ENCODE measurements at regions of chr1 and their contacts with region 1.

Region 1: GRCh38 chr1:169348383-169349036 is 19.1 kb downstream of the NME7 start:
- DNase-seq: peak; percentile 57
- ATAC-seq: peak; percentile 40; the same call in 1 of the 2 replicates
- H3K4me3 ChIP-seq: no peak overlapping the region
- H3K27ac ChIP-seq: no peak overlapping the region
- H3K4me1 ChIP-seq: no peaks in the 10 kb centered on the region
- H3K27me3 ChIP-seq: no peaks in the 10 kb centered on the region
- CTCF ChIP-seq: peak; percentile 59 to 80 (median 72)
- POLR2A ChIP-seq: no peak
- RAD21 ChIP-seq: peak; percentile 93

Region 2: DNA sequence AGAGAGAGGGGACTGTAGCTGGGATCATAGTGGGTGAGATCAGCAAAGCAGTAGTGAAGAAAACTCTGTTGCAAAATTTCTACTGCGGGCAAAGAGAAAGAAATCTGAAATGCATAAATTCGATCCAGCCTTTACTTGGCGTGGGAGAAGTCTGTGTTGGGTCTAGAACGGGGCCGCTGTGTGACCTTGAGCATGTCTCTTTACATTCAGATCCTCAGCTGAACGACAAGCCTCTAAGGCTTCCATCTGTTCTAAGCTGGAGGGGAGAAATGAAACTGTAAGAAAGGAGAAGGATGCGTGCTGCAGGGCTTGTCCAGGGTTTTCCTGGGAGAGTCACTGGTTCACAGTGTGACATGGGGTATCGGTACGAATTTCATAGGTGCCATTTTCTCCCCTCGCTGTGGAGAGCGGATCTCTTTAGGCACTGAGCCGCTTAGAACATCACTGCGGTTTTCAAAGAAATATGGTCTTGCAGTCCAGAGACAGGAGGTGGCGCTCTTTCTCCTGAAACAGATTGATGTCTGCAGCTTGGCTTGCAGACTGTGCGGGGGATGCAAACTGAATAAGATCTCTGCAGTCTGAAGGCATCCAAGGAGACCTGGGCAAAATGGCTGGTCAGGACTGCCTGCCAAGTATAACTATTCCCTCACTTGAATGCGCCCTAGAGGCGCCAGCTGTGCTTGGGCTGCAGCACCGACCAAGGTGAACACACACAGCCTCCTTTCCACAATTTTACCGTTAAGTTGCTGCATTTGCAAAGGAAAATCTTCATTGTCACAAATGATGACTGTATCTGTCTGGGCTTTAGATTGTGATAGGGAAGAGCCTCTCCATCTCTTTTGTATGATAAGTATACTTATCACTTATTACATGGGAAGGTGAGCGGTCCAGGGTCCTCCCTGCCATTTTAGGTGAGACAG is 908.8 kb before region 1 on chr1:
- CTCF ChIA-PET with region 1: interaction called, 5 read pairs
- POLR2A ChIA-PET with region 1: no interaction called
- RAD21 ChIA-PET with region 1: interaction called in 1 of 2 experiments, 3 read pairs
- intact Hi-C with region 1: loop called (anchors 2 kb)
- DNase-seq: peak; percentile 80
- ATAC-seq: peak; percentile 96
- H3K4me3 ChIP-seq: peak overlapping the region; percentile 13 to 50; a peak in 3 of 4 replicates
- H3K27ac ChIP-seq: no peak overlapping the region; the same call in 1 of the 2 replicates
- H3K4me1 ChIP-seq: peaks cover 17 to 22% of the 10 kb centered on the region in 2 experiments; a peak in 3 of 4 replicates
- H3K27me3 ChIP-seq: no peaks in the 10 kb centered on the region
- CTCF ChIP-seq: peak; percentile 82 to 86 (median 86)
- POLR2A ChIP-seq: no peak
- RAD21 ChIP-seq: peak; percentile 96

Region 3: GRCh38 chr1:168609133-168609715 is 739.3 kb before region 1 on chr1:
- CTCF ChIA-PET with region 1: interaction called, 105 read pairs
- POLR2A ChIA-PET with region 1: interaction called, 3 read pairs
- RAD21 ChIA-PET with region 1: interaction called, 11 to 24 read pairs
- intact Hi-C with region 1: no loop called
- DNase-seq: no peak
- ATAC-seq: no peak
- H3K4me3 ChIP-seq: no peak overlapping the region
- H3K27ac ChIP-seq: no peak overlapping the region
- H3K4me1 ChIP-seq: no peaks in the 10 kb centered on the region
- H3K27me3 ChIP-seq: no peaks in the 10 kb centered on the region
- CTCF ChIP-seq: no peak
- POLR2A ChIP-seq: no peak
- RAD21 ChIP-seq: no peak

Region 4: DNA sequence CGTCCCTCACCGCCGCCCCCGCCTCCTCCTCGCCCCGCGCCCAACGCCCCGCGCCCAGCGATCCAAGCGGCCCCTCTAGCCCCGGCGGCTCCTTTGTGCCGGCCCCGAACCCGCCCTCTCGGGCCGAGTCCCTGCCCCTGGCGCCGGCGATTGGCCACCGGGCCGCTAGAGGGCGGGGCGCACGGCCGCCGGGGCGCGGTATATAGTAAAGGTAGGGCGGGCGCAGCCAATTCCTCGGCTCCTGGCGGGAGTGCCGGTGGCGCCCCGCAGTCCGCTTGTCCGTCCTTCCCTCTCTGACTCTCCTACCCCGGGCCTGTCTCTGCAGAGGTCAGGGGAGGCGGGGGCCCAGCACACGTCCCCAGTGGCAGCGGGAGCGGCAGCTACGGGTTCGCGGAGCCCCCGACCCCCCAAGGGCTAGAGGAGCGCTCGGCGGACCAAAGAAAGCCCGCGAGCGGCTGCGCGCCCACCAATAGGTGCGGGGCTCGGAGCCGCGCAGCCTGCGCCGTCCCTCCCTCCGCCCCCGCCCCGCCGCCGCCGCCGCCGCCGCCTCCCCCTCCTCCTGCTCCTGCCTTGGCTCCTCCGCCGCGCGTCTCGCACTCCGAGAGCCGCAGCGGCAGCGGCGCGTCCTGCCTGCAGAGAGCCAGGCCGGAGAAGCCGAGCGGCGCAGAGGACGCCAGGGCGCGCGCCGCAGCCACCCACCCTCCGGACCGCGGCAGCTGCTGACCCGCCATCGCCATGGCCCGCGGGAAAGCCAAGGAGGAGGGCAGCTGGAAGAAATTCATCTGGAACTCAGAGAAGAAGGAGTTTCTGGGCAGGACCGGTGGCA is 242.2 kb before region 1 on chr1 and contains the start of gene ATP1B1:
- CTCF ChIA-PET with region 1: interaction called, 15 read pairs
- POLR2A ChIA-PET with region 1: no interaction called
- RAD21 ChIA-PET with region 1: interaction called in 1 of 2 experiments, 5 read pairs
- intact Hi-C with region 1: loop called (anchors 5 kb)
- DNase-seq: peak; percentile 64
- ATAC-seq: peak; percentile 86
- H3K4me3 ChIP-seq: peak within 1 kb of the TSS; percentile 72 to 84
- H3K27ac ChIP-seq: peak within 1 kb of the TSS; percentile 85
- H3K4me1 ChIP-seq: peaks cover 50 to 65% of the 10 kb centered on the region in 2 experiments
- H3K27me3 ChIP-seq: no peaks in the 10 kb centered on the region
- CTCF ChIP-seq: 0 out of 6 replicates have a peak, but pooled peaks of 1 of the 3 experiments have one; percentile 16
- POLR2A ChIP-seq: peak; percentile 90
- RAD21 ChIP-seq: no peak
- total RNA-seq, gene ATP1B1: 48.6 TPM

Region 5: GRCh38 chr1:169133801-169134502 is 214.6 kb before region 1 on chr1:
- CTCF ChIA-PET with region 1: interaction called, 3 read pairs
- POLR2A ChIA-PET with region 1: no interaction called
- RAD21 ChIA-PET with region 1: interaction called in 1 of 2 experiments, 3 read pairs
- intact Hi-C with region 1: loop called (anchors 5 kb)
- DNase-seq: no peak
- ATAC-seq: no peak; the same call in none of the 2 replicates
- H3K4me3 ChIP-seq: no peak overlapping the region
- H3K27ac ChIP-seq: no peak overlapping the region
- H3K4me1 ChIP-seq: peaks cover 0 to 22% of the 10 kb centered on the region in 2 experiments; a peak in 2 of 4 replicates
- H3K27me3 ChIP-seq: no peaks in the 10 kb centered on the region
- CTCF ChIP-seq: peak; percentile 8 to 46 (median 39); a peak in 4 of 6 replicates
- POLR2A ChIP-seq: no peak
- RAD21 ChIP-seq: peak; percentile 66

Region 6: GRCh38 chr1:169722776-169723175 is 374.3 kb after region 1 on chr1:
- CTCF ChIA-PET with region 1: no interaction called
- POLR2A ChIA-PET with region 1: no interaction called
- RAD21 ChIA-PET with region 1: no interaction called
- intact Hi-C with region 1: no loop called
- DNase-seq: no peak
- ATAC-seq: no peak
- H3K4me3 ChIP-seq: no peak overlapping the region
- H3K27ac ChIP-seq: no peak overlapping the region
- H3K4me1 ChIP-seq: no peaks in the 10 kb centered on the region
- H3K27me3 ChIP-seq: no peaks in the 10 kb centered on the region
- CTCF ChIP-seq: no peak
- POLR2A ChIP-seq: no peak
- RAD21 ChIP-seq: no peak